CD8-positive, alpha-beta memory T cell (primary cell): ENCODE measurements at regions of chr5 and their contacts with region 1.

Region 1: GRCh38 chr5:169583424-169584204 is at the start of gene SPDL1:
- DNase-seq: peak; percentile 89 to 96 (median 92)
- H3K4me3 ChIP-seq: peak within 1 kb of the TSS; percentile 93
- H3K4me3 Mint-ChIP-seq: peak within 1 kb of the TSS; percentile 96 to 99 (median 97)
- H3K27ac ChIP-seq: peak within 1 kb of the TSS; percentile 79
- H3K27ac Mint-ChIP-seq: peak within 1 kb of the TSS; percentile 85 to 97 (median 88)
- H3K4me1 ChIP-seq: peaks cover 15% of the 10 kb centered on the region
- H3K4me1 Mint-ChIP-seq: peaks cover 14 to 41% (median 38%) of the 10 kb centered on the region in 3 donors
- H3K27me3 ChIP-seq: no peaks in the 10 kb centered on the region
- H3K27me3 Mint-ChIP-seq: peaks cover 6 to 7% of the 10 kb centered on the region in 2 donors
- total RNA-seq, gene SPDL1: 39.1 to 43.1 TPM

Region 2: DNA sequence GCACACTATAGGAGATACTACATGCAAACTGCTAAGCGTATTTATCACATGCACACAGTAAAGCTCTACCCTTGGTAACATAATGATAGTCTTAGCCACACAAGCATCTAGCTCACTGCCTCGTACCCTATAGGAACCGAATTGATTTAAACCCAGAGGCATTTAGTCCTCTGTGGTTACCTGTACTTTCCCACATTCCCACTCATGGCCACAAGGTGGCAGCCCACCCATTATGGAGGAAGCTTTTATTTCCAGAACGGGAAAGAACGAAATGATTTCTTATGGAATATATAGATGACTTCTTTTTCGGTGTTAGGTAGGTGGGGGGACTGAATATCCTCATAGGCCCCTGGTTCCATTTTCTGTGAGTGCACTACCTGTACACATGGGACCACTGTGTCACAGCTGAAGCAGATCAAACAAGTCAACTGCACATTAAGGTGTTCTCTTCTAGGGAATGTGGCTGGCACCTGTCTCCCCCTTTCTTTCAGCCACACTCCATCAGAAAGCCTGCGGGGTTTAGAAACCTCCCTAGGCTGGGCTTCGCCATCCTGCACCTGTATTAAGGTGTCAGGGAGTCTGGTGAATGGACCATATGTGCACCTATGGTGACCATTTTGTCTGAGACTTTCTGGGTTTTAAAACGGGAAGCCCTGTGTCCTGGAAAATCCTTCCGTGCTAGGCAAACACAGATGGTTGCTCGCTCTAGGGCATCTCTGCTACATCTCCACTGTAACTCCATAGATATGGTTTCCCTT is 595.9 kb before region 1 on chr5:
- CTCF ChIA-PET with region 1: interaction called, 29 read pairs
- POLR2A ChIA-PET with region 1: no interaction called
- DNase-seq: peak; percentile 2 to 50 (median 19)
- H3K4me3 ChIP-seq: no peak overlapping the region
- H3K4me3 Mint-ChIP-seq: no peak overlapping the region
- H3K27ac ChIP-seq: no peak overlapping the region
- H3K27ac Mint-ChIP-seq: no peak overlapping the region
- H3K4me1 ChIP-seq: no peaks in the 10 kb centered on the region
- H3K4me1 Mint-ChIP-seq: peaks cover 0 to 4% (median 3%) of the 10 kb centered on the region in 3 donors
- H3K27me3 ChIP-seq: no peaks in the 10 kb centered on the region
- H3K27me3 Mint-ChIP-seq: peaks cover 14 to 20% of the 10 kb centered on the region in 2 donors

Region 3: GRCh38 chr5:169637085-169637548 is 53.5 kb after region 1 on chr5 and contains the start of gene DOCK2:
- CTCF ChIA-PET with region 1: interaction called, 3 read pairs
- POLR2A ChIA-PET with region 1: interaction called, 10 read pairs
- DNase-seq: peak; percentile 49 to 79 (median 64)
- H3K4me3 ChIP-seq: peak within 1 kb of the TSS; percentile 96
- H3K4me3 Mint-ChIP-seq: peak within 1 kb of the TSS; percentile 94 to 97 (median 95)
- H3K27ac ChIP-seq: peak within 1 kb of the TSS; percentile 85
- H3K27ac Mint-ChIP-seq: peak within 1 kb of the TSS; percentile 84 to 98 (median 94)
- H3K4me1 ChIP-seq: peaks cover 37% of the 10 kb centered on the region
- H3K4me1 Mint-ChIP-seq: peaks cover 47 to 56% (median 52%) of the 10 kb centered on the region in 3 donors
- H3K27me3 ChIP-seq: no peaks in the 10 kb centered on the region
- H3K27me3 Mint-ChIP-seq: no peaks in the 10 kb centered on the region
- total RNA-seq, gene DOCK2: 155 to 157 TPM